Ascending aorta (tissue), 2 donors: ENCODE measurements at regions of chr1 and their contacts with region 1.

Region 1: GRCh38 chr1:77759071-77760028 is at the start of gene USP33:
- DNase-seq: peak; percentile 53 to 90
- H3K4me3 ChIP-seq: peak within 1 kb of the TSS; percentile 90 to 96
- H3K27ac ChIP-seq: peak within 1 kb of the TSS; percentile 88 to 89
- H3K4me1 ChIP-seq: peaks cover 0 to 4% of the 10 kb centered on the region in 2 donors
- H3K27me3 ChIP-seq: no peaks in the 10 kb centered on the region
- CTCF ChIP-seq: no peak
- total RNA-seq, gene USP33: 28.6 TPM

Region 2: GRCh38 chr1:77779529-77780281 is 20.4 kb after region 1 on chr1 and contains the start of gene MIGA1:
- intact Hi-C with region 1: loop called (anchors 1 kb)
- DNase-seq: peak; percentile 57 to 93
- H3K4me3 ChIP-seq: peak within 1 kb of the TSS; percentile 84 to 92
- H3K27ac ChIP-seq: peak within 1 kb of the TSS; percentile 72 to 78
- H3K4me1 ChIP-seq: peaks cover 0 to 3% of the 10 kb centered on the region in 2 donors
- H3K27me3 ChIP-seq: no peaks in the 10 kb centered on the region
- CTCF ChIP-seq: no peak
- total RNA-seq, gene MIGA1: 13.1 TPM

Region 3: GRCh38 chr1:77978969-77979876 is 219.9 kb after region 1 on chr1 and contains the start of gene FUBP1:
- intact Hi-C with region 1: loop called (anchors 2 kb)
- DNase-seq: peak; percentile 86 to 98
- H3K4me3 ChIP-seq: peak within 1 kb of the TSS; percentile 67 to 86
- H3K27ac ChIP-seq: peak within 1 kb of the TSS; percentile 97 to 98
- H3K4me1 ChIP-seq: peaks cover 0 to 32% of the 10 kb centered on the region in 2 donors
- H3K27me3 ChIP-seq: no peaks in the 10 kb centered on the region
- CTCF ChIP-seq: peak; percentile 84 to 86 (median 86)
- total RNA-seq, gene FUBP1: 90.3 TPM